Endothelial cell of umbilical vein (primary cell): ENCODE measurements at regions of chr5 and their contacts with region 1.

Region 1: GRCh38 chr5:142426129-142427014 is 101.6 kb upstream of the SPRY4 start:
- DNase-seq: peak; percentile 85
- H3K4me3 ChIP-seq: peak overlapping the region in 1 of 3 experiments; percentile 38
- H3K27ac ChIP-seq: peak overlapping the region; percentile 70
- H3K4me1 ChIP-seq: peaks cover 44% of the 10 kb centered on the region
- H3K27me3 ChIP-seq: no peaks in the 10 kb centered on the region
- CTCF ChIP-seq: no peak
- POLR2A ChIP-seq: peak; percentile 64

Region 2: DNA sequence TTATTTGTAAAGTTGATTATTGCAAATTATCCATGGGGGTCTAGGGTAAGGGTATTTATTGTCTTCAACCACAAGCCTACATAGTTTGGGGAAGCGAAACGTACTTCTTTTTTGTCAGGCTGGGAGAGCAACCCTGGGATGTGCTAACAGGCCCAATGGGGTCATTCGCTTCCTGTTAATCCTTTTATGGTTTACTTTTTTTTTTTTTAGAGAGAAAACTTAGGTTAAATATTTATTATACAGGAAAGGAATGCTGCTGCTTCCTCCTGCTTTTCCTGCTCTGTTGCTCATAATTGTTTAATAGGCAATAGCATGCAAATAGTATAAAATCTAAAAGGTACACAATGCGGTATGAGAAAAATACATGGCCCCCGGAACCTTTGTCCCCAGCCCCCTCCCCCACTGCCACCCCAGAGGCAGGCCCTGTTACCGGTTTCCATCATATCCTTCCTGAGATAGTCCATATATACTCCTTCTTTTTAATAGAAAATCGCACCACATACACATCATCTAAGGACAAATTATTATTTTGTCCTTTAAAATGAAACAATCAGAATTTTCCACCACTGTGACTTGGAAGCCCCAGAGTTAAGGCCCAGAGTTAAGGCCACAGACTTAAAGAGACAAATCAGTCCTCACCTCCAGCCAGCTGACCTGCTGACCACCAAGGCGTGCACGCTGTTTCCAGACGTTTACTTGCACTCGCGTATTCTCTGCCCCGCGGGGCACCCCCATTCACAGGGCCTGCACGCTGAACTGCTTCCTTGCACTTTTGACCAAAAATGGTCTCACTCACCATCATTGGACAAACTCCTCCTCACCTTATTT is 233.9 kb before region 1 on chr5:
- CTCF ChIA-PET with region 1: no interaction called
- POLR2A ChIA-PET with region 1: no interaction called
- dilution Hi-C with region 1: no loop called
- intact Hi-C with region 1: loop called (anchors 1 kb)
- DNase-seq: peak; percentile 41
- H3K4me3 ChIP-seq: no peak overlapping the region
- H3K27ac ChIP-seq: peak overlapping the region; percentile 75
- H3K4me1 ChIP-seq: peaks cover 29% of the 10 kb centered on the region
- H3K27me3 ChIP-seq: no peaks in the 10 kb centered on the region
- CTCF ChIP-seq: no peak
- POLR2A ChIP-seq: no peak

Region 3: GRCh38 chr5:142324871-142325724 is 101.3 kb before region 1 on chr5 and contains the start of gene SPRY4:
- CTCF ChIA-PET with region 1: interaction called, 5 read pairs
- POLR2A ChIA-PET with region 1: interaction called, 3 read pairs
- dilution Hi-C with region 1: no loop called
- intact Hi-C with region 1: loop called (anchors 1 kb)
- DNase-seq: peak; percentile 98
- H3K4me3 ChIP-seq: peak within 1 kb of the TSS; percentile 76 to 89 (median 81)
- H3K27ac ChIP-seq: peak within 1 kb of the TSS; percentile 88
- H3K4me1 ChIP-seq: peaks cover 48% of the 10 kb centered on the region
- H3K27me3 ChIP-seq: no peaks in the 10 kb centered on the region
- CTCF ChIP-seq: no peak
- POLR2A ChIP-seq: peak; percentile 97
- total RNA-seq, gene SPRY4: 33.9 and 49.5 TPM in 2 replicates

Region 4: GRCh38 chr5:142405814-142406390 is 20.5 kb before region 1 on chr5:
- CTCF ChIA-PET with region 1: interaction called, 14 read pairs
- POLR2A ChIA-PET with region 1: no interaction called
- dilution Hi-C with region 1: no loop called
- intact Hi-C with region 1: no loop called
- DNase-seq: no peak
- H3K4me3 ChIP-seq: no peak overlapping the region
- H3K27ac ChIP-seq: no peak overlapping the region
- H3K4me1 ChIP-seq: no peaks in the 10 kb centered on the region
- H3K27me3 ChIP-seq: no peaks in the 10 kb centered on the region
- CTCF ChIP-seq: no peak
- POLR2A ChIP-seq: no peak

Region 5: GRCh38 chr5:142472300-142472951 is 46.1 kb after region 1 on chr5:
- CTCF ChIA-PET with region 1: no interaction called
- POLR2A ChIA-PET with region 1: no interaction called
- dilution Hi-C with region 1: no loop called
- intact Hi-C with region 1: loop called (anchors 1 kb)
- DNase-seq: peak; percentile 83
- H3K4me3 ChIP-seq: no peak overlapping the region
- H3K27ac ChIP-seq: peak overlapping the region; percentile 82
- H3K4me1 ChIP-seq: peaks cover 16% of the 10 kb centered on the region
- H3K27me3 ChIP-seq: no peaks in the 10 kb centered on the region
- CTCF ChIP-seq: no peak
- POLR2A ChIP-seq: peak; percentile 30